Psoas muscle (tissue), 8 donors: ENCODE measurements at regions of chr7 and their contacts with region 1.

Region 1: GRCh38 chr7:29039821-29040578 is 81.9 kb upstream of the TRIL start:
- DNase-seq: no peak
- ATAC-seq: no peak
- H3K4me3 ChIP-seq: no peak overlapping the region
- H3K27ac ChIP-seq: no peak overlapping the region
- H3K4me1 ChIP-seq: peaks cover 13% of the 10 kb centered on the region
- H3K27me3 ChIP-seq: no peaks in the 10 kb centered on the region
- CTCF ChIP-seq: no peak

Region 2: DNA sequence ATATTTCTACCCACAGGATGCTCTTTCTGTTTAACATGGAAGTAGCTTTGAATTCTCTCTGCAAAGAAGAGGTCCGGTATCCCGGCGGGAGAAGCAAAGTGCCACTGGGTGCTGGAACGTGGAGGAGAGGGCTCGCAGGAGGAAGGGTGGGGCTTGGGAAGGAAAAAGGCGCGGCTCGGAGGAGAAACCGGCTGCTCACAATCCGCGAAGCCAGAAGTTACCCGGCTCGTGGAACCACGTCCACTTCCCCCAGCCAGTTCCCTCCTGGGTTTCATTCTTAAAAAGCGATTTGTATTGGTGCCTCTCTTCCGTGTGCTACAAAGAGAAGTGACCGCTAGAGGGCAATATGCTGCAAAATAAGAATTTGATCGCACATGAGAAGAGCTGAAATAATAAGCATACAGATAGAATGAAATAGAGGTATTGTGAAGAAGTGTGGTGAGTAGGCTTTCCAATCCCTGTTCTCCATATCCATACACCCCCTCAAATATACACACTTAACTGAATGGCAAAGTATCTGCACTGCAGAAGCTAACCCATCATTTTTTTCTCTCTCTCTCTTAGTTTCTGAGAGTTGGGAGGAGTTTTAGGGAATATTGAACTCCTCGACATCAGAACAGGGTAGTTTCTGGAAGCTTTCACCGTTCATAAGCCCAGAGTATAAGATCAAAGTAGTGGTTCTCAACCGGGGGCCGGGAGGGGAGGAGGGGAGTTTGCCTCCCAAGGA is 113.0 kb before region 1 on chr7:
- intact Hi-C with region 1: no loop called
- DNase-seq: peak; percentile 66 to 78
- ATAC-seq: peak; percentile 78 to 87 (median 84)
- H3K4me3 ChIP-seq: peak overlapping the region; percentile 61
- H3K27ac ChIP-seq: no peak overlapping the region
- H3K4me1 ChIP-seq: peaks cover 10% of the 10 kb centered on the region
- H3K27me3 ChIP-seq: no peaks in the 10 kb centered on the region
- CTCF ChIP-seq: peak; percentile 81

Region 3: DNA sequence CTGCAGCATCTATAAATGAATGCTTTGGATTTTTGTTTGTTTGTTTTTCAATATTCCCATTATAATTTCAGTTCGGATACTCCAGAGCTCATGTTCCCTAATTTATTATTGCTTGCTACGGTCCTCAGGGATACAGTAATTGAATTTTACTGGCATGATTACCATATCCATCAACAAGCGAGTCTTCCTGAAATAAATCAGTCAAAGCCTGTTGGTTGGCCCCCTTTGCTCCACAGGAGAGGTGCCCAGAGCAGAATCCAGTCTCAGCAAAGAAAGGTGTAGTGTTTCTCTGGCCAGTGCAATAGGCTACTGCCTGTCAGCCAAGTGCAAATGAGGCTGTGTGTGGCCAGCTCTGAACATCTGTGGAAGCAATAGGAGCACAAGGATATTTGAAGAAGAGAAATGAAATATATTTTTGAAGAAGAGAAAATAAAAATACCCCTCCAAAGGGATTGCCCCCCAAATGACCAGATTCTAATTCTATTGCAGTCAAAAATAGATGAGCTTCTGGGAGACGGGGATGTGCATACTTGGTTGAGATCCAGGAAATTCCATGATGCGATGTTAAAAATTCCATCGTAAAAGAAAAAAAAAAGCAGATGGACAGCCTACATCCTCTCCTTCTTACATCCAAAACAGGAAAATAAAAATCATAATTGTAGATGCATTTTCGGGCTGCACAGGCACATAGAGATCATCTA is 100.0 kb before region 1 on chr7:
- intact Hi-C with region 1: no loop called
- DNase-seq: no peak
- ATAC-seq: peak; percentile 53 to 82 (median 70)
- H3K4me3 ChIP-seq: no peak overlapping the region
- H3K27ac ChIP-seq: no peak overlapping the region
- H3K4me1 ChIP-seq: peaks cover 19% of the 10 kb centered on the region
- H3K27me3 ChIP-seq: no peaks in the 10 kb centered on the region
- CTCF ChIP-seq: no peak

Region 4: GRCh38 chr7:29084832-29085231 is 44.8 kb after region 1 on chr7:
- intact Hi-C with region 1: loop called in 1 of 2 experiments (anchors 5 kb)
- DNase-seq: no peak
- ATAC-seq: no peak
- H3K4me3 ChIP-seq: no peak overlapping the region
- H3K27ac ChIP-seq: no peak overlapping the region
- H3K4me1 ChIP-seq: peaks cover 25% of the 10 kb centered on the region
- H3K27me3 ChIP-seq: no peaks in the 10 kb centered on the region
- CTCF ChIP-seq: no peak

Region 5: GRCh38 chr7:29119538-29120199 is 79.7 kb after region 1 on chr7:
- intact Hi-C with region 1: no loop called
- DNase-seq: no peak
- ATAC-seq: no peak
- H3K4me3 ChIP-seq: no peak overlapping the region
- H3K27ac ChIP-seq: no peak overlapping the region
- H3K4me1 ChIP-seq: peaks cover 16% of the 10 kb centered on the region
- H3K27me3 ChIP-seq: no peaks in the 10 kb centered on the region
- CTCF ChIP-seq: no peak